PC-3 (cell line): ENCODE measurements at regions of chr4 and their contacts with region 1.

Region 1: DNA sequence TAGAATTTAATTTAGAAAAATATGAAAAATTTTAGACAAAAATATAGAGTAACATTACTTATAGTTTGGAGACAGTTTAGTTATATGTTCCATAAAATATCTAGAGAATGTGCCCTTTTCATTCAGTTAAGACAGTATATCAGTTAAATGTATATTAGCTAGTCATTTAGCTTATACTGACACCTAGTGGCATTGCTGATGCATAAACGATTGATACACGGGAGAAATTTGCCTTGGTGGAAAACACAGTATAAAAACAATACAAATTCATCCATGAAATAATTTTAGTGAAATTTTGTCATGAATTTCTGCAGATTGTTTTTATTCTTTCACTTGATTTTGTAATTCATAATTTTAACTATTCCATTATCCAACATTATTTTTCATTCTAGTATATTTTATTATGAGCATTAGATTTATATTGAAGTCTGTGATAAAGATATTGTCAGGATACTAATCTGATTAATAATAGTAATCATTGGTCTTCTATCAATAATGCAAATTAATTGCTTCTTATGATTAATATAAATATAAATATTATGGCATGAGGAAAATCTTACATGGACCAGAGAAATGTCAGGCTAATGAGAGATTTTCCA is 219.0 kb downstream of the TLL1 start:
- DNase-seq: peak; percentile 64
- ATAC-seq: peak; percentile 33; the same call in 1 of the 2 replicates
- H3K4me3 ChIP-seq: no peak overlapping the region
- H3K27ac ChIP-seq: no peak overlapping the region
- H3K4me1 ChIP-seq: peaks cover 4% of the 10 kb centered on the region
- H3K27me3 ChIP-seq: no peaks in the 10 kb centered on the region
- CTCF ChIP-seq: peak; percentile 71

Region 2: DNA sequence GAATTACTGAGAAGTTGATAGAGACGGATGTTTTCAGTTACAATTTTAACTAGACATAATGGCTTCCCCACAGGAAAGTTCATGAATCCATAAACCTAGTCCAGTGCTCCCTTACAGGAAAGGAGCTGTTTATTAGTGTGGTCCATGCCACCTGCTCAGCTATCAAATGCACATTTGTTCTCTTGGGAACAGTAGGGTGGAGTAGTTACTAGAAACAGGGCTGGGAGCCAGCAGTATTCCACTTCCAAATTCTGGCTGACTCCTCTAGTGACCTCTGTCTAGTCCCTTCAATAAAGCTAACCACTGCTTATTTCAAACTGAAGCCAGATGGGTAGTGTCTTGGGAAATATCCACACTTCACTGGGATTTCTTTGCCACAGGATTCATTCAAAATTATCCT is 307.3 kb before region 1 on chr4:
- CTCF ChIA-PET with region 1: no interaction called
- POLR2A ChIA-PET with region 1: no interaction called
- intact Hi-C with region 1: loop called (anchors 1 kb)
- DNase-seq: peak; percentile 6
- ATAC-seq: no peak
- H3K4me3 ChIP-seq: no peak overlapping the region
- H3K27ac ChIP-seq: no peak overlapping the region
- H3K4me1 ChIP-seq: no peaks in the 10 kb centered on the region
- H3K27me3 ChIP-seq: no peaks in the 10 kb centered on the region
- CTCF ChIP-seq: no peak